Activated CD4-positive, alpha-beta memory T cell treated with anti-CD3 and anti-CD28 coated beads for 36 hours (primary cell): ENCODE measurements at regions of chr16 and their contacts with region 1.

Region 1: DNA sequence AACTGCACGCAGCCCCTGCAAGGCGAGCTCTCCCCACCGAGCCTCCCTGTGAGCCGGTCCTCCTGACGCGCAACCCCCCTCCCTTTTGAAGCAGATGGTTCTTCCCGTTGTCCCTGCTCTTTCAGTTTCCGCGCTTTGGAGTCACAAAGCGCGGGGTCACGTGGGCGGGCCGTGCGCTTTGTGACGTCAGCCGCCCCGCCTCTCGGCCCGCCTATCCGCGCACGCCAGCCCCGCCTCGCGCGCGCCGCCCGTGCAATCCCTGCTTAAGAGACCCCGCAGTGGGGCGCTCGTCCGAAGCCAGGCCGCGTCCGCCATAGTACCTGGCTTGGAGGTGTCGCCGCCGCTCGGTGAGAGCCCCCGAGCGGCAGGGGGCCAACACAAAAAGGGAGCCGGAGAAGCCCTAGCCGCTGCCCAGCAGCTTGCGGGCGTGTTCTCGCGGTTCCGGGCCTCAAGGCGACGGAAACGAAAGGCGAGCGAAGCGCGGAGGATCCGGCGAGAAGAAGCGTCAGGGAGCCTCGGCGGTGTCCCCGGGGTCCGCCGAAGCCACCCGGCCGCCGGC is at the start of gene RBBP6:
- DNase-seq: peak; percentile 95
- H3K4me3 Mint-ChIP-seq: peak within 1 kb of the TSS; percentile 100
- H3K27ac Mint-ChIP-seq: peak within 1 kb of the TSS; percentile 100
- H3K4me1 Mint-ChIP-seq: peaks cover 17% of the 10 kb centered on the region
- H3K27me3 Mint-ChIP-seq: no peaks in the 10 kb centered on the region
- total RNA-seq, gene RBBP6: 74.6 to 76.1 TPM

Region 2: GRCh38 chr16:24562811-24563210 is 23.4 kb after region 1 on chr16:
- CTCF ChIA-PET with region 1: no interaction called
- POLR2A ChIA-PET with region 1: no interaction called
- intact Hi-C with region 1: loop called (anchors 2 kb)
- DNase-seq: no peak
- H3K4me3 Mint-ChIP-seq: no peak overlapping the region
- H3K27ac Mint-ChIP-seq: peak overlapping the region; percentile 26
- H3K4me1 Mint-ChIP-seq: peaks cover 8% of the 10 kb centered on the region
- H3K27me3 Mint-ChIP-seq: no peaks in the 10 kb centered on the region

Region 3: GRCh38 chr16:24721830-24722238 is 182.5 kb after region 1 on chr16:
- CTCF ChIA-PET with region 1: no interaction called
- POLR2A ChIA-PET with region 1: interaction called, 3 read pairs
- intact Hi-C with region 1: loop called (anchors 2 kb)
- DNase-seq: peak; percentile 86
- H3K4me3 Mint-ChIP-seq: peak overlapping the region; percentile 14
- H3K27ac Mint-ChIP-seq: peak overlapping the region; percentile 48
- H3K4me1 Mint-ChIP-seq: peaks cover 38% of the 10 kb centered on the region
- H3K27me3 Mint-ChIP-seq: peaks cover 6% of the 10 kb centered on the region

Region 4: DNA sequence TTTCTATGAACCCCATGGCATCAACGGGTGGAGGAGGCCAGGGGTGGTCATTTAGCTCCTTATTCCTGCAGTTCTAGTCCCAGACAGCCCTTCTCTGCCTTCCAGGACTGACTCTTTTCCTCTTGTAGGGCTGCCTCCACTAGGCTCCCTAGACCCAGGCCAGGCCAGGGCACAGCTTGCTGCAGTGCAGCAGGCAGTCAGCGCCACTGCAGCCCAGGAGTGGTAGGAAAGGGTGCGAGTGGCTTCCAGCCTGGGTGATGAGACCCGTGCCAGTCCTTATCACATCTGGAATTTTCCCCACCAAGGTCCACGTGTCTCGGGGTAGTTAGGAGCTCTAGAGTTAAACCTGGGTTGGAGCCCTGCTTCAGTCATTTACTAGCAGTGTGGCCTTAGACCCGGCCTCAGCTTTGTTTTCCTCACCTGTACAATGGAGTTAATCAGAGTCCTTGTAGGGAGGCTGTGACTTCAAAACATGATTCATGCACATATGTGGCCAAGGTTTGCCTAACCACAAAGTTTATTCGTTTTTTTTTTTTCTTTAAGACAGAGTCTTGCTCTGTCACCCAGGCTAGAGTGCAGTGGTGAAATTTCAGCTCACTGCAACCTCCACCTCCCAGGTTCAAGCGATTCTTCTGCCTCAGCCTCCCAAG is 311.0 kb after region 1 on chr16:
- CTCF ChIA-PET with region 1: interaction called, 3 read pairs
- POLR2A ChIA-PET with region 1: no interaction called
- intact Hi-C with region 1: loop called (anchors 1 kb)
- DNase-seq: peak; percentile 53
- H3K4me3 Mint-ChIP-seq: no peak overlapping the region
- H3K27ac Mint-ChIP-seq: no peak overlapping the region
- H3K4me1 Mint-ChIP-seq: peaks cover 21% of the 10 kb centered on the region
- H3K27me3 Mint-ChIP-seq: no peaks in the 10 kb centered on the region

Region 5: GRCh38 chr16:25031441-25032307 is 492.3 kb after region 1 on chr16:
- CTCF ChIA-PET with region 1: no interaction called
- POLR2A ChIA-PET with region 1: no interaction called
- intact Hi-C with region 1: loop called (anchors 1 kb)
- DNase-seq: peak; percentile 94
- H3K4me3 Mint-ChIP-seq: peak overlapping the region; percentile 92
- H3K27ac Mint-ChIP-seq: peak overlapping the region; percentile 91
- H3K4me1 Mint-ChIP-seq: peaks cover 34% of the 10 kb centered on the region
- H3K27me3 Mint-ChIP-seq: no peaks in the 10 kb centered on the region

Region 6: DNA sequence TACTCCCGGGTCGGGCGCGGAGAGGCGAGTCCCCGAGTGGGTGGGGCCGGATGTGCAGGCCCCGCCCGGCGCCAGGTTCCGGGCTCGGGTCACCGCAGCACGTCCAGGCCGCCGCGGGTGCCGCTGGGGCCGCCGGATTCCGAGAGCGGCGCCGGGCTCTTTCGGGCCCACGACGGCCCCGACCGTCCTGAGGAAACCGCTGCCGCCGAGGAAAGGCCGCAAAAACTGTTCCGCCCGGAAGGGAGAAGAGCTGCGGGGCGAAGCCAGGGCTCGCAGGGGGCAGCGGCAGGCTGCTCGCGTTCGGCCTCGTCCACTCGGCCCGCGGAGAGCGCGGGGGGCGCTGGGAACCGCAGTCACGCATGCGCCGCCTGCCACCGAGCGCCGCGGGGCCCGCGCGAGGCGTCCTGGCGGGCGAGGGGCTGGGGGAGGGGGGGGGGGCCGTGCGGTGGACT is 718.2 kb after region 1 on chr16 and contains the start of gene ZKSCAN2:
- CTCF ChIA-PET with region 1: no interaction called
- POLR2A ChIA-PET with region 1: no interaction called
- intact Hi-C with region 1: loop called (anchors 5 kb)
- DNase-seq: peak; percentile 91
- H3K4me3 Mint-ChIP-seq: peak within 1 kb of the TSS; percentile 95
- H3K27ac Mint-ChIP-seq: peak within 1 kb of the TSS; percentile 91
- H3K4me1 Mint-ChIP-seq: peaks cover 54% of the 10 kb centered on the region
- H3K27me3 Mint-ChIP-seq: no peaks in the 10 kb centered on the region
- total RNA-seq, gene ZKSCAN2: 4.6 to 5.1 TPM